Naive thymus-derived CD8-positive, alpha-beta T cell (primary cell): ENCODE measurements at regions of chr15 and their contacts with region 1.

Region 1: GRCh38 chr15:40694688-40695468 is at the start of gene RAD51:
- DNase-seq: peak; percentile 84 to 96 (median 90)
- ATAC-seq: peak; percentile 90 to 93
- H3K4me3 Mint-ChIP-seq: peak within 1 kb of the TSS; percentile 94 to 100 (median 99)
- H3K27ac Mint-ChIP-seq: peak within 1 kb of the TSS; percentile 95 to 100 (median 99)
- H3K4me1 Mint-ChIP-seq: peaks cover 12 to 31% (median 26%) of the 10 kb centered on the region in 4 donors
- H3K27me3 Mint-ChIP-seq: no peaks in the 10 kb centered on the region
- polyA plus RNA-seq, gene RAD51: 0.46 TPM in 1 of 3 donors, not detected in the others

Region 2: GRCh38 chr15:40763801-40764732 is 69.2 kb after region 1 on chr15 and contains the start of gene GCHFR:
- POLR2A ChIA-PET with region 1: interaction called, 14 read pairs
- DNase-seq: peak; percentile 34 to 75 (median 60)
- ATAC-seq: peak; percentile 44 to 68
- H3K4me3 Mint-ChIP-seq: peak within 1 kb of the TSS; percentile 77 to 92 (median 88)
- H3K27ac Mint-ChIP-seq: peak within 1 kb of the TSS; percentile 77 to 94 (median 90)
- H3K4me1 Mint-ChIP-seq: peaks cover 9 to 45% (median 42%) of the 10 kb centered on the region in 4 donors
- H3K27me3 Mint-ChIP-seq: no peaks in the 10 kb centered on the region
- polyA plus RNA-seq, gene GCHFR: 46.5 to 53.9 (median 50.6) TPM

Region 3: DNA sequence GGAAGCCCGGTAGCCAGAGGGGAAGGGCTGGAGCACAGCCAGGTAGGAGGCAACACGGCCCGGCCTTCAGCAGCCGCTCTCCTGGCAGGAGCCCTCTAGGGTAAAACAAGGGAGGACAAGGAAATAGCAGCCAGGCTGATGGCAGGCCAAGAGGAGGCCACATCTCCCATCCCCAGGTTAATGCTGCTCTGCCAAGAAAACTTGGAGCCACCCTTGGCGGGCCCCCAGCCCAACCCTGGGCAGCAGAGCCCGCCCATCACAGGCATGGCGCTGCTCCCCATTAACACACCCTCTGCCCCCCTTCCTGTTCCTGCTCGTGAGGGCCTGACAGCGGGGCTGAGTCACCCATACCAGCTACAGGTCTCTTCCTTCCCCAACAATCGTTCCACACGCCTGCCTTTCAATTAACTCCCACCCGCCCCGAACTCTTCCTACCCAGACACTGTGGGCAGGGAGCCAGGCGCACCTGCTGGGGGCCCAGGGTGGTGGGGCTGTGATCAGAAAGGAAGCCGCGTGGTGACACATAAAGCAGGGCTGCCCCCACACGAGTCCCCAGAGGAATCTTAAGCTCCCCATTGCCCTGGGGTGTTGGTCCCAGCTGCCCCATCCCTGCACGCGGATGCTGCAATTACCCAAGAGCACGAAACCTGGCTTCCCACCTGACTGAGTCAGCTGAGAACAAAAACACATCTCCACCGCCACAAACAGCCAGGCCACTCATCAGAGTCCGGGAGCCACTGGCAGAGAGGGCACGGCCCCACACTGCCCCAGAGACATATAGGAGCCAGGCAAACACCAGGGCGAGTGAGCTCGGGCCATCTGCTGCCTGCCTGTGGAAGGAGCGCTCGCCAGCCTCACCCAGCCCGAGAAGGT is 74.6 kb after region 1 on chr15 and contains the start of gene C15orf62:
- POLR2A ChIA-PET with region 1: interaction called, 14 read pairs
- DNase-seq: peak; percentile 33 to 83 (median 54)
- ATAC-seq: peak; percentile 64 to 73
- H3K4me3 Mint-ChIP-seq: peak within 1 kb of the TSS; percentile 57 to 82 (median 77)
- H3K27ac Mint-ChIP-seq: peak within 1 kb of the TSS; percentile 88 to 98 (median 94)
- H3K4me1 Mint-ChIP-seq: peaks cover 18 to 48% (median 43%) of the 10 kb centered on the region in 4 donors
- H3K27me3 Mint-ChIP-seq: no peaks in the 10 kb centered on the region
- polyA plus RNA-seq, gene C15orf62: 0.40 TPM in 1 of 3 donors, not detected in the others

Region 4: DNA sequence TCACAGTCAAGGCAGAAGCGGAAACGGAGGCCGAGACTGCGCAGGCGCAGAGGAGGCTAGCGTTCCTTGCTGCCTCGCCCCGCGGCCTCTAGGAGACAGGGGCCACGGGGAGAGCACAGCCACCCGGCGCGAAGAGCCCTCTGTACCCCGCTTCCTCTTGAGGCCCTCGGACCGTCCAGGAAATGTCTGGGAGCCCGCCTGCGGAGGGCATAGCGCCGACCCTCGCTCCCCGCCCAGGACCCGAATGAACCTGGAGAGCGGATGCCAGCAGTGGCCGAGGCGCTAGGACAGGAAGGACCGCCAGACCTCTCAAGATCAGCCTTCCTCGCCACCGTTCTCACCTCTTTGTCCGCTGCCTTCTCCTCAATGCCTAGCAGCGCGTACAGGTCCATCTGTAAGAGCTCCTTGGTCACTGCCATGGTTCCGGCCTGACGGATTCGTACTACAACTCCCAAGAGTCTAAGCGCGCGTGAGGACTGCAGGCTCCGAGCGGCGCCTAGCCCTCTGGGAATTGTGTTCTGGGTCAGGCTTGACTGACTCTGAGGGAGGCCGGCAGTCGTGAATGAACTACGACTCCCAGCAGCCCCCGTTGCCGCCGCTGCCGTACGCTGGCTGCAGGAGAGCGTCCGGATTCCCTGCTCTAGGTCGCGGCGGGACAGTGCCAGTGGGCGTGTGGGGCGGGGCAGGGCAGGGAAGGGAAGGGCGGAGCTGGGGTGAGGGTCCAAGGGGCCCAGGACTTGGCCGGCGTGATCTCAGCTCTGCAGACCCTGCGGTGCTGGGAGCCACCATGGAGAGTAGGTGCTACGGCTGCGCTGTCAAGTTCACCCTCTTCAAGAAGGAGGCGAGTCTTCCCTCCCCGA is 112.4 kb after region 1 on chr15 and contains the starts of genes DNAJC17 and ZFYVE19:
- POLR2A ChIA-PET with region 1: interaction called, 24 read pairs
- DNase-seq: peak; percentile 88 to 96 (median 92)
- ATAC-seq: peak; percentile 96 to 98
- H3K4me3 Mint-ChIP-seq: peak within 1 kb of the TSS; percentile 89 to 100 (median 99)
- H3K27ac Mint-ChIP-seq: peak within 1 kb of the TSS; percentile 94 to 99 (median 98)
- H3K4me1 Mint-ChIP-seq: peaks cover 13 to 32% (median 32%) of the 10 kb centered on the region in 4 donors
- H3K27me3 Mint-ChIP-seq: no peaks in the 10 kb centered on the region
- polyA plus RNA-seq, gene DNAJC17: 17.5 to 37.5 (median 31.3) TPM
- polyA plus RNA-seq, gene ZFYVE19: 13.2 to 15.5 (median 13.8) TPM